Right ventricle myocardium inferior (tissue), 1 donor: ENCODE measurements at regions of chr15 and their contacts with region 1.

Region 1: DNA sequence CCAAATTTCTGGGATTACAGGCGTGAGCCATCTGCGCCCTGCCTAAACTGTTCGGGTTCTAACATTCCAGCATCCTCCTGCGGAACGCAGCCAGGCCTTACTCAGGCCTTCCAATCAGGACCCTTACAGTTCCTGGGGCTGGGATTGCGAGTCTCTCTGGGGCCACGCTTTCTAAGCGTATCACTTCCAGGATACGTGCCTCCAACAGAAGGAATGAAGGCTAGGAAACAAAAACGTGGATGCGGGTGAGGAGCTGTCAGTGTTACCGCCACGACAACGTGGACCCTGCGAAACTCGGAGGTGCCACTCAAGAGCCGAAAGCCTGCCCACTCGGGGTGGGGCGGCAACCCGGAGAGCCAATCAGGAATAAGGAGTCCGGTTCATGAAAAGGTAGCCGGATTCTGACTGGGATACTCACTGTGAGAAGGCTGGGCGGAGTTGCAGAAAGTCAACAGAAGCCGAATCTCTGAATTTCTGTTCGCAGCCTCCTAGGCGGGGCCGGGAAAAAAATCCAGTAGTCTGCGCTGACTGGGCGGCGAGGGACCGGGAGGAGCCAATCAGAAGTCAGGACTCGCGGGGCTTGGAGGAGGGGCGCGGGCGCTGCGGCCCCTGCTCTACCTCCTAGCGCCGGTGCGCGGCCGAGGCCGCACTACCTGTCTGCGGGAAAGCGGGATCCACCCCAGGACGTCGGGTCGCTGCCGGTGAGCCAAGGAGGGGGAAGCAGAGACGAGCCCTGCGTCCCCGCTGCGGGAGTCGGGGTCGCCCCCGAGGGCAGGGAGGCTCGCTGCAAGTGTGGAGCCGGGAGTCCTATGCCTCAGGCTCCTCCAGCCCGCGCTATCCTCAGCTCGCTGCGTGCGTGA is at the start of gene HYKK:
- DNase-seq: peak; percentile 92
- ATAC-seq: peak; percentile 98
- total RNA-seq, gene HYKK: 4.4 TPM

Region 2: DNA sequence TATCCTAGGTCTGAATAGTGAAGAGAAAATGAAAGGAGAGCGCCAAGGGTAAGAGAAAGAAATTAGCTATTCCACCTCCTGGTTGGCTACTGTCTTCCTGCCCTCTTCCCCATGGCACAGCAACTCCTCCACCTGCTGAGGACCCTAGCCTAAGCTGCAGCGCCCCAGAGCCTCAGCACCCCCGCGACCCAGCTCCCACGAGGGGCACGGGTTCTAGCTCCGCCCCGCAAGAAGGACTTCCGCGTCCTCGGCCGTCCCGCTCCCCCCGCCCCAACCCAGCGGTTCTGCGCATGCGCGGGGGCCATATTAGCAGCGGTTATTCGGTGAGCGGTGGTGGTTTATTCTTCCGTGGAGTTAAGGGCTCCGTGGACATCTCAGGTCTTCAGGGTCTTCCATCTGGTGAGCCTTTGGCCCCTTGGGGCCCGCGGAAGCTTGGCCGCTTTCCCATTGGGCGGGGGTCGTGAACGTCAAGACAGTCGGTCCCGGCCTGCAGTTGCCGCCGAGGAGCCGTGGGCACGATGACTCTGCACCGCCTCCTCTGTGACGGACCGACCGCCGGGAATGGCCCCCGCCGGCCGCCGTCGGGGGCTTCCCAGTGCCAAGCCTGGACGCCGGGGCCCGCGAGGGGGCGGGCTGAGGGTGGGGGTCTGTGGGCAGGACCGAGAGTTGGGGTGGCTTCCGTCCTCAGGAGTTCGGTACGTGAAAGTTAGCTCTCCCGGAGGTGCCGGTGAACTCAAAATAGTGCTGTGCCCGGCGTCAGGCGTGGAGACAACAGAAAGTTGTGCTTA is 33.1 kb after region 1 on chr15 and contains the start of gene PSMA4:
- intact Hi-C with region 1: loop called (anchors 5 kb)
- DNase-seq: peak; percentile 96
- ATAC-seq: peak; percentile 94
- total RNA-seq, gene PSMA4: 118 TPM